Dorsolateral prefrontal cortex (tissue), 120 donors: ENCODE measurements at regions of chr1 and their contacts with region 1.

Region 1: GRCh38 chr1:170414989-170415709 is 116.8 kb upstream of the GORAB start:
- DNase-seq: no peak
- H3K4me3 ChIP-seq: no peak overlapping the region
- H3K27ac ChIP-seq: peak overlapping the region in 1 of 59 donors; percentile 13
- H3K27me3 ChIP-seq: no peaks in the 10 kb centered on the region
- CTCF ChIP-seq: no peak

Region 2: DNA sequence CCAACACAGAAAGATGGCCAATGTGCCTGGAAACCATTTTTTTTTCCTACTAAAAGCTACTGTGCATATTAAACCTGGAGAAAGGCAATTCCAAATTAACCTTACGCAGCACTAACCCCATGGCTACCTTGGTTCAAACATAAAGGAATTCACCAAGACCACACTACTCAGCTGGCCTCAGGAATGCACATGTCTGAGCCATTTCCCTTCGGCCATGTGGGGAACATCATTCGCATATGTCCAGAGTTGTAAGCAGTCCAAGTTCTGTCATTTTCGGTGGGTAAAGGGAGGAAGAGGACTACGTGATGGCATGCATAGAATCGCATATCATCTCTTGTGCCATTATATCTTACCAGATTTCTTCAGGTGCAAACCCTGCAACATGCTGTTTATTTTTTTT is 94.0 kb before region 1 on chr1:
- intact Hi-C with region 1: no loop called
- DNase-seq: no peak
- H3K4me3 ChIP-seq: no peak overlapping the region
- H3K27ac ChIP-seq: no peak overlapping the region
- H3K27me3 ChIP-seq: peaks cover 0 to 3% (median 0%) of the 10 kb centered on the region in 45 donors
- CTCF ChIP-seq: no peak

Region 3: DNA sequence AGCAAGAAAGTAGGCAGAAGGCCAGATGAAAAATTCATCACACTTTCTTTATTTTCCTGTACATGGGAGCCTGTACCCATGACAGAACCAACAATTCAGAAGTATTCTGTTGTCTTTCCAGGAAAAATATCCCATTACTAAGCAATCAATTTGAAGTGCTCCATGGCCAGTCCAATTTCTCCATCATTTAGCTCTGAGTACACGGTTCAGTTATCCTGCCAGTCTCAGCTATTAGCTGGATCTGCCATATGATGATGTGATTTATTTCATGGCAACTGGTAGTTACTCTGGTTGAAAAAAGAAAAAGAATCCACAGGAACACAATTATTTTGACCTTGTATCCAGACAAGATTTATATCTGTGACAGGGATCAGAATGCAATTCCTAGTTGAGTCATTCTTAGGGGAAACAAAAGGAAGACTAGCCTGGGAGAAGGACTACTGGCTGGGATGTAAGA is 46.2 kb after region 1 on chr1:
- intact Hi-C with region 1: no loop called
- DNase-seq: no peak
- H3K4me3 ChIP-seq: no peak overlapping the region
- H3K27ac ChIP-seq: no peak overlapping the region
- H3K27me3 ChIP-seq: no peaks in the 10 kb centered on the region
- CTCF ChIP-seq: no peak

Region 4: GRCh38 chr1:170596701-170597100 is 181.6 kb after region 1 on chr1:
- intact Hi-C with region 1: loop called in 1 of 2 experiments (anchors 5 kb)
- DNase-seq: no peak
- H3K4me3 ChIP-seq: no peak overlapping the region
- H3K27ac ChIP-seq: no peak overlapping the region
- H3K27me3 ChIP-seq: no peaks in the 10 kb centered on the region
- CTCF ChIP-seq: no peak